Spleen (tissue), 13 donors: ENCODE measurements at regions of chr5 and their contacts with region 1.

Region 1: GRCh38 chr5:177311723-177312648 is at the start of gene MXD3:
- DNase-seq: peak; percentile 97
- H3K4me3 ChIP-seq: peak within 1 kb of the TSS; percentile 35 to 89 (median 70)
- H3K27ac ChIP-seq: peak within 1 kb of the TSS in 7 of 8 donors; percentile 36 to 94 (median 87)
- H3K4me1 ChIP-seq: peaks cover 34 to 85% (median 71%) of the 10 kb centered on the region in 6 donors
- H3K27me3 ChIP-seq: no peaks in the 10 kb centered on the region
- CTCF ChIP-seq: no peak
- POLR2A ChIP-seq: no peak
- total RNA-seq, gene MXD3: 19.3 to 80.7 (median 26.7) TPM

Region 2: DNA sequence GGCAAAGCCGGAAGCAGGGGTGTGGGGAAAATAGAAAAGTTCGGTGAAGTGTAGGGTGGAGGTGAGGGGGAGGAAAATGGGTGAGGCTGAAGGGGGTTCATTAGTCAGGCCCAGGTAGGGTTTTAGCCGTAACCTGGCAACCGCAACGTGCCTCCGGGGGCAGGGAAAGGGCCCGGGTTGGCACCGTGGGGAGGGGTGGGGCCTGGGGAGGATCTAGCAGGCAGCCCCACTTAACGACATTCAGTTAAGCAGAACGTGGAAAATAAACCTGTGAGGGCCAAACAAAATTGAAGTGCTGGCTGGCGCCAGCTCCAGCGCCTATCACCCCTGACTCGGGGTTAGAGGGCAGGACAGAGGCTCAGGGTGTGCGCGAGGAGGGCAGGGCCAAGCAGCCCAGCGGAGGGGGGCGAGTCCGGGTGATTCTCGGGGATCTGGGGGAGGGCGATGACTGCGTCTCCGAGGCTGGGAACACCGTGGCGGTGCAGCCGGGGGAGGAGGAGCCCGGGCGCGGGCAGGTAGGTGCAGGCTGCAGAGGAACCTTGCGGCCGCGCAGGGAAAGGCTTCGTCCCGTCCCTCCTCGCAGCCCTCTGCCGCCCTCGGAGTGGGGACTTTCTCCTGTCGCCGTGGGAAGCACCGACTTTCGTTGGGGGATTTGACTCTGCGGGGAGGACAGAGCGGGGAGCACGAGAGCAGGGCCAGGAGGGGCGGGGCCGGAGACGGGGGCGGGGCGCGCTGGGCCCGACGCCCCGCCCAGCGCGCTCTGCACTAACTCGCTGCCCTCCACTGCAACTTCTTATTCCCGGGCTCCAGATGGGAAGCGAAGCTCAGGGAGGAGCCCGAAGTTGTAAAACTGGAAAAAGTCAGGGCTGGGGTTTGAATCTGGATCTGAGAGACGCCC is 50.9 kb after region 1 on chr5:
- intact Hi-C with region 1: loop called (anchors 10 kb)
- DNase-seq: peak; percentile 89
- H3K4me3 ChIP-seq: peak overlapping the region; percentile 30 to 76 (median 41)
- H3K27ac ChIP-seq: peak overlapping the region; percentile 27 to 92 (median 66)
- H3K4me1 ChIP-seq: peaks cover 38 to 100% (median 81%) of the 10 kb centered on the region in 6 donors
- H3K27me3 ChIP-seq: no peaks in the 10 kb centered on the region
- CTCF ChIP-seq: peak in 1 of 11 experiments; percentile 12
- POLR2A ChIP-seq: no peak

Region 3: DNA sequence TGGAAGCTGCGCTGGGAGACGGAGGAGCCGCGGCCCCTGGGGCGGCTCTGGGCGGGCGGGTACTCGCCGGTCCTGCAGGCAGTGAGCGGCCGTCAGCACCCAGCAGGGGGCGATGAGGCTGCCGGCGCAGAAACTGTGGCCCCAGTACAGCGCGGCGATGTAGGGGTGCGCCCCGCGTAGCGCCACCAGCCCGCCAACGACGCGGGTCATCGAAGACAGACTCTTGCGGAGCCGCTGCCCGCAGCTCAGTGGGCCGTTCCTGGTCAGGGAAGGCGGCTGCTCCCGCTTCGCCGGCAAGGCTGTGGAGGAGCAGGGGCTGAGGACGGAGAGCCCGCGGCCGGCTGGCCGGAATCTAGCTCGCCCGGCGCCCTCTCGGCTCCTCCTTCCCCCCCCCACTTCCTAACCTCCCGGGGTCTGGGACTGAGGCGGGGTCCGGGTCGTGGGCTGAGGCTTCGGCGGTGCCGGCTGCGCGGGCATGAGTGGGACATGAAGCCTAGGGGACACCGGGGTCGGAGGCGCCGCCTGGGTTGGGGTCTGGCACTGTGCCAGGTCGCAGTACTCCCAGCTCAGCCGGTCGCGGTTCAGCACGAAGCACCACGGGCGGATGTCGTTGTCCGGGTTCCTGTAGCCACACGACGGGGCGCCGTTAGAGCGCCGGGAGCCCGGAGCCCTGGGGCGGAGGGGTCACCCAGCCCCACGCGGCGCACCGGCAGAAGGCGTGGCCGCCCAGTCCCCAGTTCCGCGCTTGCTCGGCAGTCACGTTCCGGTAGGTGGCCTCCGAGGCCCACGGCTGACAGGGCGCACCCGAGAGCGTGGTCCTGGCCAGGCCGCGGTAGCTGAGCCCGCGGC is 92.0 kb after region 1 on chr5:
- intact Hi-C with region 1: no loop called
- DNase-seq: peak; percentile 98
- H3K4me3 ChIP-seq: peak overlapping the region; percentile 46 to 86 (median 60)
- H3K27ac ChIP-seq: peak overlapping the region in 7 of 8 donors; percentile 29 to 84 (median 57)
- H3K4me1 ChIP-seq: peaks cover 33 to 61% (median 51%) of the 10 kb centered on the region in 6 donors
- H3K27me3 ChIP-seq: peaks cover 0 to 52% (median 43%) of the 10 kb centered on the region in 7 donors
- CTCF ChIP-seq: peak; percentile 80 to 92 (median 85)
- POLR2A ChIP-seq: no peak